Activated CD4-positive, alpha-beta memory T cell treated with anti-CD3 and anti-CD28 coated beads for 36 hours (primary cell): ENCODE measurements at regions of chr3 and their contacts with region 1.

Region 1: GRCh38 chr3:50292159-50293078 is at the start of gene IFRD2:
- DNase-seq: peak; percentile 98
- H3K4me3 Mint-ChIP-seq: peak within 1 kb of the TSS; percentile 92
- H3K27ac Mint-ChIP-seq: peak within 1 kb of the TSS; percentile 90
- H3K4me1 Mint-ChIP-seq: peaks cover 20% of the 10 kb centered on the region
- H3K27me3 Mint-ChIP-seq: no peaks in the 10 kb centered on the region
- total RNA-seq, gene IFRD2: 111 to 112 TPM

Region 2: DNA sequence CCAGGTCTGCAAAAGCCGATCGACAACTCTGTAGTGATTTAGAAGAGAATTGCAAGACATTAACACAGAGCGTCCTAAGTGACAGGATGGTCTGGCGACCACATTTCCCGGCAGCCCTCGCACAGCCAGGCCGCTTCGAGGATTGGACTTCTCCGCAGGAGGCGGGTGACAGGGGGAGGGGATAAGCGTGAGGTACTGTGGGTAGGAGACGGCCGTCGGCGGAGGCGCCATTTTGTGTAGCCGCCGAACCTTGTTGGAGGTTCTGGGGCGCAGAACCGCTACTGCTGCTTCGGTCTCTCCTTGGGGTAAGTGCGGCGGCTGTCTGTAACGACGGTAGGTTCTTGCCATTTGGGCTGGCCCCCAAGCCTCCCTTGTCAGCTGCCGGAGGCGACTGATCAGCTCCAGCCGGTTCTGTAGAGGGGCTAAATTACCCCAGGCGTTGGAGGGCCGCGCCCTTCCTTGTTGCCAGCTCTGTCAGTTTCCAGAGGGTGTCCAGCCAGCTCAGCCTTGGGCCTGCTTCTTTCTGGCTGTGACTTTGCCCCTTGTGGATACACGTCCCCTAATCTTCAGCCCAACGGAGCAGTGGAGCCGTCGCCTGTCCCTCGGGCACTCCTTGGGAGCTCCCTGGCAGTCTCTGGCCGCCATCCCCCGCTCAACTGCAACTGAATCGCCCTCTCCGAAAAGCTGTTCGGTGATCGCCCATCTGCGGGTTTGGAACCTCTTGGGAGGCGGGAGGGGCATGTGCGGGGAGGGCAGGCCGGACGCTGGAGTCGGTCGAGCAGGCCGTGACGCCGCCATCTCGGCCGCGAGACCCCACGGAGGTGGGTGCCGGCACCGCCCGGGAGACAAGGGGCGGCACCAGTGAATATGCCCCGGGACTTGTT is 203.5 kb before region 1 on chr3 and contains the start of gene RBM5:
- CTCF ChIA-PET with region 1: no interaction called
- POLR2A ChIA-PET with region 1: no interaction called
- intact Hi-C with region 1: no loop called
- DNase-seq: peak; percentile 96
- H3K4me3 Mint-ChIP-seq: peak within 1 kb of the TSS; percentile 98
- H3K27ac Mint-ChIP-seq: peak within 1 kb of the TSS; percentile 96
- H3K4me1 Mint-ChIP-seq: peaks cover 24% of the 10 kb centered on the region
- H3K27me3 Mint-ChIP-seq: no peaks in the 10 kb centered on the region
- total RNA-seq, gene RBM5: 95.2 to 107 TPM

Region 3: DNA sequence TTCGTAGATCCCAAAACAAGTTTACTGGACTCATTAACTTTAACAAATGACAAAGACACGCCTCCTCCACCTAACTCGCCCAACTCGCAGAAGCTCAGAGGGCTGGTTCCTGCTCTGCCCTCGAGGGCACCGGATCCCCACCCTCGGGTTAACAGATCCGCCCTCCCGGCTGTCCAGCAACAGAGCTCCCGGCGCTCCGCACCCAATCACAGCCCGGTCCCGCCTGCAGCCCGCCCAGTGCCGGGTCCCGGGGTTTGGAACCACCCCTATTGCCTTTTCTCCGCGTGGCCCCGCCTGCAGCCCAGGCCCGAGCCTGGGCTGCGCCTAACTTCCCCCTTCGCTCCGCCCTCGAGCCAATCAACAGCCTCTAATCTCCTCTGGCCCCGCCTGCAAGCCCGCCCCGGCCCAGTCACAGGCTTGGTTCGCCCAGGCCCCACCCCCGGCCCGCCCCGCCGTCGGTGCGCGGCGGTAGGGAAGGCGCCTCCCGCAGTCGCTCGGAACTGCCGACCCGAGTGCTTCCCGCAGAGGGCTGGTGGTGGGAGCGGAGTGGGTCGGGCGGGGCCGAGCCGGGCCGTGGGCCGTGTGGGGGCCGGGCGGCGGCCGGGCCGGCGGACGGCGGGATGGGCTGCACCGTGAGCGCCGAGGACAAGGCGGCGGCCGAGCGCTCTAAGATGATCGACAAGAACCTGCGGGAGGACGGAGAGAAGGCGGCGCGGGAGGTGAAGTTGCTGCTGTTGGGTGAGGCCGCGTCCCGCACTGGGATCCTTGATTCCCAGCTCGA is 56.5 kb before region 1 on chr3 and contains the start of gene GNAI2:
- CTCF ChIA-PET with region 1: no interaction called
- POLR2A ChIA-PET with region 1: interaction called, 4 read pairs
- intact Hi-C with region 1: loop called (anchors 1 kb)
- DNase-seq: peak; percentile 100
- H3K4me3 Mint-ChIP-seq: peak within 1 kb of the TSS; percentile 91
- H3K27ac Mint-ChIP-seq: peak within 1 kb of the TSS; percentile 94
- H3K4me1 Mint-ChIP-seq: peaks cover 31% of the 10 kb centered on the region
- H3K27me3 Mint-ChIP-seq: no peaks in the 10 kb centered on the region
- total RNA-seq, gene GNAI2: 346 to 349 TPM

Region 4: GRCh38 chr3:50278868-50279224 is 13.6 kb before region 1 on chr3 and contains the start of gene LSMEM2:
- CTCF ChIA-PET with region 1: interaction called, 5 read pairs
- POLR2A ChIA-PET with region 1: interaction called, 16 read pairs
- intact Hi-C with region 1: loop called (anchors 1 kb)
- DNase-seq: no peak
- H3K4me3 Mint-ChIP-seq: no peak within 1 kb of the TSS
- H3K27ac Mint-ChIP-seq: no peak within 1 kb of the TSS
- H3K4me1 Mint-ChIP-seq: peaks cover 20% of the 10 kb centered on the region
- H3K27me3 Mint-ChIP-seq: peaks cover 21% of the 10 kb centered on the region
- total RNA-seq, gene LSMEM2: not detected

Region 5: DNA sequence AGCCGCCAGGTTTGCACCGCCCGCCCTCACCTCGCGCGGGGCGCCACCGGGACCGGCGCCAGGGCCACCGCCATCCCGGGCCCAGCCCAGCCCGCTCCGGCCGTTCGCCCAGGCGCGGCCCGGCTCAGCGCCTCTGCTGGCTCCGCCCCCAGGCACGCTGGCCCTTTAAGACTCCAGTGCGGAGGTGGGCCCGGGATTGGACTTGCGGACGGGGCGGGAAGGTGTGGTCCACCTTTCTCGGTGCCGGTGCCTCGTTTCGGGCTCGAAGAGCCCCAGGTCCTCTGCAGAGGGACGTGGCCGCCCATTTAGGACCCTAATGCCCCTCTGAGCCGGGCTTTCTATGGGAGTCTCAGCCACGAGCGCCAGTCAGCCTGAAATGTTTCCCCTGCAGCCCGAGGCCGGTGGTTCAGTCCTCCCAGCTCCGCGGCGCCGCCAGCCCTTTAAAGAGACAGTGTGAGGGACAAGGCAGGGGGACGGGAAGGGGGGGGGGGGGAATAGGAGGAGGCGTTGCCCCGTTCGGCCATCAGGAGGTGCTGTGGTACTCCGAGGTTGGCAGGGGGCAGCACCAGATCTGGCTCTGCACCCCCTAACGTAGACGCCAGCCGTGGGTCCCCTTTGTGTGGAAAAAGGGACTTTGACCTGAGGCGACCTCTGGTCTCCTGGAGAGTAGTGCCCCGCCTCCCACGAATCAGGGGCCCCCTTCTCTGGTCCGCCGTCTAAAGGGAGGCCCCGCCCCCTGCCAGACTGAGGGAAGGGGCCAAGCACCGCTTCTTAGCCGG is 29.1 kb after region 1 on chr3:
- CTCF ChIA-PET with region 1: interaction called, 30 read pairs
- POLR2A ChIA-PET with region 1: no interaction called
- intact Hi-C with region 1: no loop called
- DNase-seq: peak; percentile 88
- H3K4me3 Mint-ChIP-seq: peak overlapping the region; percentile 77
- H3K27ac Mint-ChIP-seq: peak overlapping the region; percentile 86
- H3K4me1 Mint-ChIP-seq: peaks cover 30% of the 10 kb centered on the region
- H3K27me3 Mint-ChIP-seq: no peaks in the 10 kb centered on the region

Region 6: DNA sequence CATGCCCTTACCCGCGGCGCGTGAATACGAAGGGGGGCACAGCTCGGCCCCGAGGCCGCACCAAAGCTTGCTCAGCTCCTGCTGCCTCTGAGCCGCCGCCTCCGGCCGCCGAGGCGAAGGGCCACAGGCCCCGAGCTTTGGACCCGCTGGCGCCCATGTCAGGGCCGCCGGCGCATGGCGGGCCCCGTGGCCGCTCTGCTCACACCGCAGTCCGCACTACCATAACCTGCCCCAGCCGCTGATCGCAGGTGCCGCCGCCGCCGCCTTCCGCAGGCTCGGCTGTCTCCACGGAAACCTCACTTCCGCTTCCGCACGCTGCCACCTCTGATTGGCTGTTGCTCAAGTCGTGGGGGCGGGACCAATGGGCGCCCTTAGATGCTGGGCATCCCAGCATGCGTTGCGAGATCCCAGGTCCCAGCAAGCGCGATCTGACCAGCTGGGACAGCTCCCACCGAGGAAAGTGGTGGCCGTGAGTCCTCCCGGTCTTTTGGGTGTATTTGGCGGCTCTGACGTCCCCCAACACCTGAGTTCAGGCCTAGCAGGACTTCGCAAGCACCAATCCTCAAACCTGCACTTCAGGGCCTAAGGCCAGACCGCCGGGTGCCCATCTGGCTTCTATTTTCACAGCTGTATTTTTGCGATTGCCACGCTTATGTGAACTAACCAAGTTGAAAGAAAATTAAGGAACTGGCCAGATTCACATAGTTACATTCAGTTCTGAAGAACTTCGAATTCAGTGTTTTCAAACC is 35.7 kb after region 1 on chr3 and contains the start of gene TUSC2:
- CTCF ChIA-PET with region 1: interaction called, 30 read pairs
- POLR2A ChIA-PET with region 1: interaction called, 8 read pairs
- intact Hi-C with region 1: loop called (anchors 1 kb)
- DNase-seq: peak; percentile 98
- H3K4me3 Mint-ChIP-seq: peak within 1 kb of the TSS; percentile 89
- H3K27ac Mint-ChIP-seq: peak within 1 kb of the TSS; percentile 64
- H3K4me1 Mint-ChIP-seq: peaks cover 23% of the 10 kb centered on the region
- H3K27me3 Mint-ChIP-seq: no peaks in the 10 kb centered on the region
- total RNA-seq, gene TUSC2: 18.7 to 19.7 TPM

Region 7: GRCh38 chr3:50358911-50359759 is 66.7 kb after region 1 on chr3 and contains the start of gene TMEM115:
- CTCF ChIA-PET with region 1: no interaction called
- POLR2A ChIA-PET with region 1: interaction called, 4 read pairs
- intact Hi-C with region 1: loop called (anchors 1 kb)
- DNase-seq: peak; percentile 97
- H3K4me3 Mint-ChIP-seq: peak within 1 kb of the TSS; percentile 95
- H3K27ac Mint-ChIP-seq: peak within 1 kb of the TSS; percentile 86
- H3K4me1 Mint-ChIP-seq: peaks cover 39% of the 10 kb centered on the region
- H3K27me3 Mint-ChIP-seq: no peaks in the 10 kb centered on the region
- total RNA-seq, gene TMEM115: 16.0 TPM